MCF 10A (cell line): ENCODE measurements at regions of chr12 and their contacts with region 1.

Region 1: GRCh38 chr12:62006076-62006732 is 254.0 kb upstream of the USP15 start:
- DNase-seq: peak; percentile 63
- H3K4me3 Mint-ChIP-seq: no peak overlapping the region
- H3K27ac Mint-ChIP-seq: no peak overlapping the region
- H3K4me1 Mint-ChIP-seq: no peaks in the 10 kb centered on the region
- H3K27me3 Mint-ChIP-seq: no peaks in the 10 kb centered on the region
- CTCF ChIP-seq: peak; percentile 53

Region 2: DNA sequence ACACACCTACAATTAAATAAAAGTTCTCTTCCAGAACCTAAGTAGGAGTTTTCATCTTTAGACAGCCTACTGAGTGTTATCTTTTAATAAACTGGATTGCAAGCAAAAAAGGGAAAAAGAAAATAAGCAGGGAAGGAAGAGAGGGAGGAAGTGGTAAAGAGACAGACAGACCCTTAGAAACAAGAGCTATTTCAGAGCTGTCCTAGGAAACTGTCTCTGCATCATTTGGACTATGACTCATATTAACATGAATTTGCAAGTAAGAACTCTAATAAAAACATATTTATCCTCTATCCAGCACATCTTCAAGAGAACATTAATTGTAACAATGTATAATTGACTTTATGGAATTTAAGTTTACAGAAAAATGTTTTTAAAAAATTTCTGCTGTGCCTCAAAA is 184.8 kb before region 1 on chr12:
- CTCF ChIA-PET with region 1: no interaction called
- POLR2A ChIA-PET with region 1: no interaction called
- intact Hi-C with region 1: no loop called
- DNase-seq: peak; percentile 15
- H3K4me3 Mint-ChIP-seq: no peak overlapping the region
- H3K27ac Mint-ChIP-seq: no peak overlapping the region
- H3K4me1 Mint-ChIP-seq: peaks cover 6% of the 10 kb centered on the region
- H3K27me3 Mint-ChIP-seq: no peaks in the 10 kb centered on the region
- CTCF ChIP-seq: no peak

Region 3: GRCh38 chr12:62123721-62124203 is 117.6 kb after region 1 on chr12:
- CTCF ChIA-PET with region 1: interaction called, 3 read pairs
- POLR2A ChIA-PET with region 1: no interaction called
- intact Hi-C with region 1: loop called (anchors 5 kb)
- DNase-seq: peak; percentile 56
- H3K4me3 Mint-ChIP-seq: no peak overlapping the region
- H3K27ac Mint-ChIP-seq: no peak overlapping the region
- H3K4me1 Mint-ChIP-seq: no peaks in the 10 kb centered on the region
- H3K27me3 Mint-ChIP-seq: no peaks in the 10 kb centered on the region
- CTCF ChIP-seq: peak; percentile 35

Region 4: GRCh38 chr12:62772416-62772955 is 766.3 kb after region 1 on chr12:
- CTCF ChIA-PET with region 1: no interaction called
- POLR2A ChIA-PET with region 1: no interaction called
- intact Hi-C with region 1: no loop called
- DNase-seq: peak; percentile 12
- H3K4me3 Mint-ChIP-seq: no peak overlapping the region
- H3K27ac Mint-ChIP-seq: no peak overlapping the region
- H3K4me1 Mint-ChIP-seq: peaks cover 12% of the 10 kb centered on the region
- H3K27me3 Mint-ChIP-seq: no peaks in the 10 kb centered on the region
- CTCF ChIP-seq: no peak